Left colon (tissue), 2 donors: ENCODE measurements at regions of chr12 and their contacts with region 1.

Region 1: GRCh38 chr12:111396726-111397445 is 8.8 kb upstream of the SH2B3 start:
- DNase-seq: peak; percentile 74 to 90
- ATAC-seq: peak; percentile 93

Region 2: GRCh38 chr12:111529424-111530368 is 132.8 kb after region 1 on chr12:
- intact Hi-C with region 1: loop called in 1 of 2 experiments (anchors 10 kb)
- DNase-seq: peak in 1 of 2 donors; percentile 28
- ATAC-seq: peak; percentile 56